ENCODE measurements at regions of chr20 and their contacts with region 1.

Region 1: GRCh38 chr20:61120595-61121515 is 131.2 kb upstream of the CDH4 start:
- DNase-seq: peak; percentile 61
- ATAC-seq: peak; percentile 87
- H3K4me3 Mint-ChIP-seq: no peak overlapping the region
- H3K27ac Mint-ChIP-seq: no peak overlapping the region
- H3K4me1 Mint-ChIP-seq: peaks cover 13% of the 10 kb centered on the region
- H3K27me3 Mint-ChIP-seq: peaks cover 61% of the 10 kb centered on the region
- CTCF ChIP-seq: peak; percentile 37; the same call in 1 of the 2 replicates

Region 2: DNA sequence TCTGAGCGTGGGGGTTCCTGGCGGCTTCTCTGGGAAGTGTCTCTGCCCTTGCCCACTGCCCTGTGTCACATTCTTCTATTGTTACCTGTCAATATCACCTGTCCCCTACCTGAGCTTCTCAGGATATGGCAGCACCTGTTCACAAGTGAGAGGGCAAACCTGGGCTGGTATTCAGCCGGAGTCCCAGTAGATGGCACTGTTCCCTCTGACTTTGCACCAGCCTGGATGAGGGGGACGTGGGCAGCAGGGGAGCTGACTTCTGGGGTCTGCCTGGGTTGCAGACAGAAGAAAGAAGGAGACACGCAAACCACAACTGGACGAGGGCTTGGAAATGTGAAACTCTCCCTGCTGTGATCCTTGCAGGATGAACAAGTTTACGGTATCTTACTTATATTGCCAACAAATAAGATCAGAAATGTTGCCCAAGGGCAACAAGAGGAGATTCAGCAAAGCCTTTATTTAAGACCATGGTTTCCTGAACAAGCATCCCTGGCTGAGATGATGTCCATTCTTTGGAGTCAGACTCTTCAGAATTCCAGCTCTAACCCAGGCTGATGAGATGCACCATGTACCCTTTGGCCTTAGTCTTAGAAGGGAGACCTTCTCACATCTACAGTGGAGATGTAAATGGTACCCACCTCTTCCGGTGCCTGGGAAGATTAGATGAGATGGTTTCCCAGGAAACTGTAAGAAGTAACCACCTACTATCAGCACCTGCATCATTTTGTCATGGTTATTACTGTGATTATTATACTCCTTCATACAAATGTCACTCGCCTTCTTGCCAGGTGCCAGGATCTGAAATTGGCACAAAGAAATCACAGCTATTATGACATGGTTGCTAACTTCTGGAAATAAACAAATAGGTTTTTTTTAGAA is 268.8 kb before region 1 on chr20:
- CTCF ChIA-PET with region 1: interaction called, 11 read pairs
- POLR2A ChIA-PET with region 1: no interaction called
- DNase-seq: peak; percentile 68
- ATAC-seq: peak; percentile 90
- H3K4me3 Mint-ChIP-seq: no peak overlapping the region
- H3K27ac Mint-ChIP-seq: no peak overlapping the region
- H3K4me1 Mint-ChIP-seq: peaks cover 6% of the 10 kb centered on the region; the same call in 1 of the 2 replicates
- H3K27me3 Mint-ChIP-seq: peaks cover 23% of the 10 kb centered on the region
- CTCF ChIP-seq: peak; percentile 64